Prostate gland (tissue), 2 donors: ENCODE measurements at regions of chr3 and their contacts with region 1.

Region 1: GRCh38 chr3:191414732-191415131 is 46.2 kb upstream of the PYDC2 start:
- DNase-seq: no peak
- H3K4me3 ChIP-seq: no peak overlapping the region
- H3K27ac ChIP-seq: no peak overlapping the region
- H3K4me1 ChIP-seq: no peaks in the 10 kb centered on the region
- H3K27me3 ChIP-seq: no peaks in the 10 kb centered on the region
- CTCF ChIP-seq: no peak
- POLR2A ChIP-seq: no peak

Region 2: GRCh38 chr3:192444096-192444790 is 1029.5 kb after region 1 on chr3:
- intact Hi-C with region 1: loop called (anchors 5 kb)
- DNase-seq: peak; percentile 42
- H3K4me3 ChIP-seq: no peak overlapping the region
- H3K27ac ChIP-seq: no peak overlapping the region
- H3K4me1 ChIP-seq: no peaks in the 10 kb centered on the region
- H3K27me3 ChIP-seq: peaks cover 2% of the 10 kb centered on the region
- CTCF ChIP-seq: peak; percentile 75 to 92 (median 86)
- POLR2A ChIP-seq: no peak